BJ (cell line): ENCODE measurements at regions of chr11 and their contacts with region 1.

Region 1: DNA sequence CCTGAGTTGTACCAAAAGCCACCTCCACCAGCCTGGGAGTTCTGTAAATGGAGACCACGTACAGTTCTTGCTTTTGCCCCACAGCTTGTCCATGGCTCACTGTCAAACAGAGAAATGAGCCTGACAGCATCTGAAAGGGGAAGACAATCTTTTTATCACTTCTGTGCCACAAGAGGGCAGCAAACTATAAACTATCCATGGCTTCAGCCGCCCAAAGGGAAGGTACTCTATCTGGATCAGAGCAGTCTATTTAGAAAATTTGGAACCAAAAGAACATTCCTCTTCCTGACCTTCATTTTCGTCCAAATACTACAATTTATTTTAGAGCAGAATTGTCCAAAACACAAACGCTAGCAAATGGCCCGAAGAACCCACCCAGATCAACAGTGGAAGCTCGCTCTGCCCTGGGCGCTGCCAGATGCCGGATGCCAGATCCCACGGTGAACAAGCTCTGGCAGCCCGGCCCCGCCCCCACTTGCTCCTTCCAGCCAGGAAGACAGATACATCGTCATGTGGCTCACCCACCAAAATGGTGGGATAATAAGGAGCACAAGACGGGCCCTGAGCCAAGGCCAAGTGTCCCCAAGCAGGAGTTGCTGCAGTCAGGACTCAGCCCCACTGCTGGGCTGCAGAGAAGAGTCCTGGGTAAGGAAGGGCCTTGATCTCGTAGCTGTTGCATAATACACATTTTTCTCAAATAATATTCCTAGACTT is 23.9 kb upstream of the SCGB1A1 start:
- DNase-seq: peak; percentile 41
- H3K4me3 ChIP-seq: peak overlapping the region; percentile 13; the same call in 1 of the 2 replicates
- H3K27me3 ChIP-seq: peaks cover 6% of the 10 kb centered on the region
- CTCF ChIP-seq: peak; percentile 56

Region 2: DNA sequence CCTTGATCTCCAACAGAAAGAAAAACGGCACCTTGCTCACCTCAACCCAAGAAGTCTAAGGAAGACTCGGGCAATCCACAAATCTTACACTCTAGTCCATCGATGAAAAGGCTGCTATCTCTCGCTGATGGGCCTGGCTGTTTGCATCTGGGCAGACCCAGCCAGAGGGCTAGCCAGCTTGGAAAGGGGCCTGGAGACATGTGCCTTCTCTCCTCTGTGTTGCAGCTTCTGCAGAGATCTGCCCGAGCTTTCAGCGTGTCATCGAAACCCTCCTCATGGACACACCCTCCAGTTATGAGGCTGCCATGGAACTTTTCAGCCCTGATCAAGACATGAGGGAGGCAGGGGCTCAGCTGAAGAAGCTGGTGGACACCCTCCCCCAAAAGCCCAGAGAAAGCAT is 27.0 kb after region 1 on chr11:
- CTCF ChIA-PET with region 1: interaction called, 44 read pairs
- POLR2A ChIA-PET with region 1: no interaction called
- DNase-seq: no peak
- H3K4me3 ChIP-seq: no peak overlapping the region
- H3K27me3 ChIP-seq: no peaks in the 10 kb centered on the region; the same call in 1 of the 2 replicates
- CTCF ChIP-seq: no peak

Region 3: DNA sequence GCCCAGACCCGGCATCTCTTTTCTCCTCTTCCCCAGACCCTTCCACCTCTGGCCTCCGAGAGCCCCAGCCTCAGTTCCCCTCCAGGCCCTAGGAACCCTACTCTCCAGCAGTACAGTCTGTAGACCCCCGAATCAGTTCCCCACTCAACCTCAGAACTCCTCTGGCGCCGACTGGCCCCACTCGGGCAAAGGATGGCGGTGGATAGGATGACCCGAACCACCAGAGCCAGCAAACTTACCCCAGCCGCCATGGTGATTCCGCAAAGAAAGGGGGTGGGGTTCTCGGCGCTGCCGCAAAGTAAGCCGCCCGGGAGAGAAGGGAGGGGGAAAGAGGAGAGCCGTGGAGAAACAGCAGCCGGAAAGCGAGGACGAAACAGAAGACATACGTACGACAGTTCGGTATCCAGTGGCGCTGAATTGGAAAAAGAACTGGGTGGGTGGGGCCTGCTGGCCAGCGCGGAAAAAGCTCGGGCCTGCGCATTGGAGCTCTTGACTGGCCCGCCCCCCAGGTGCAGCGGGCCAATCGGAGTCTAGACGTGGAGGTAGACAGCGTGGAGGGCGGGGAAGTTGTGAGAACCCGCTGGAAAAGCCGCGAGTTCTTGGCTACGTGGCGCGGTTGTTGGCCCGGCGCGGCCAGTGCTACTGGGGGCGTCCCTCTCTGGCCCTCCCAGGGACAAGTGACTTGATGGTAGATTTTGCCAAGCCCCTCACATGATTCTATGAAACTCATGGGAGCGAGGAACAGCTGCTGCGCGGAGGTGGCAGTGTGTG is 178.8 kb after region 1 on chr11 and contains the start of gene EEF1G:
- CTCF ChIA-PET with region 1: interaction called, 11 read pairs
- POLR2A ChIA-PET with region 1: no interaction called
- DNase-seq: peak; percentile 100
- H3K4me3 ChIP-seq: peak within 1 kb of the TSS; percentile 63
- H3K27me3 ChIP-seq: no peaks in the 10 kb centered on the region
- CTCF ChIP-seq: no peak
- polyA plus RNA-seq, gene EEF1G: 2,358 and 2,459 TPM in 2 replicates

Region 4: GRCh38 chr11:62591448-62592145 is 196.6 kb after region 1 on chr11 and contains the start of gene TUT1:
- CTCF ChIA-PET with region 1: interaction called, 16 read pairs
- POLR2A ChIA-PET with region 1: no interaction called
- DNase-seq: peak; percentile 96
- H3K4me3 ChIP-seq: peak within 1 kb of the TSS; percentile 51
- H3K27me3 ChIP-seq: no peaks in the 10 kb centered on the region
- CTCF ChIP-seq: no peak
- polyA plus RNA-seq, gene TUT1: 6.4 and 9.9 TPM in 2 replicates

Region 5: GRCh38 chr11:62601394-62602140 is 206.6 kb after region 1 on chr11 and contains the start of gene MTA2:
- CTCF ChIA-PET with region 1: interaction called, 10 read pairs
- POLR2A ChIA-PET with region 1: no interaction called
- DNase-seq: peak; percentile 85
- H3K4me3 ChIP-seq: peak within 1 kb of the TSS; percentile 96
- H3K27me3 ChIP-seq: no peaks in the 10 kb centered on the region
- CTCF ChIP-seq: no peak
- polyA plus RNA-seq, gene MTA2: 16.4 and 17.8 TPM in 2 replicates

Region 6: GRCh38 chr11:62694455-62695167 is 299.6 kb after region 1 on chr11:
- CTCF ChIA-PET with region 1: interaction called, 29 read pairs
- POLR2A ChIA-PET with region 1: interaction called, 3 read pairs
- DNase-seq: no peak
- H3K4me3 ChIP-seq: no peak overlapping the region
- H3K27me3 ChIP-seq: no peaks in the 10 kb centered on the region
- CTCF ChIP-seq: peak; percentile 88